Endothelial cell of umbilical vein (primary cell): ENCODE measurements at regions of chr19 and their contacts with region 1.

Region 1: GRCh38 chr19:40305403-40305802 is 20.3 kb upstream of the AKT2 start:
- DNase-seq: peak; percentile 82
- H3K4me3 ChIP-seq: no peak overlapping the region
- H3K27ac ChIP-seq: no peak overlapping the region
- H3K4me1 ChIP-seq: no peaks in the 10 kb centered on the region
- H3K27me3 ChIP-seq: no peaks in the 10 kb centered on the region
- CTCF ChIP-seq: peak; percentile 66 to 68
- POLR2A ChIP-seq: no peak

Region 2: GRCh38 chr19:40294560-40294959 is 10.8 kb before region 1 on chr19:
- CTCF ChIA-PET with region 1: interaction called, 11 read pairs
- POLR2A ChIA-PET with region 1: no interaction called
- dilution Hi-C with region 1: no loop called
- intact Hi-C with region 1: no loop called
- DNase-seq: no peak
- H3K4me3 ChIP-seq: no peak overlapping the region
- H3K27ac ChIP-seq: no peak overlapping the region
- H3K4me1 ChIP-seq: no peaks in the 10 kb centered on the region
- H3K27me3 ChIP-seq: no peaks in the 10 kb centered on the region
- CTCF ChIP-seq: no peak
- POLR2A ChIP-seq: no peak

Region 3: GRCh38 chr19:40444192-40445028 is 139.0 kb after region 1 on chr19 and contains the start of gene SERTAD3:
- CTCF ChIA-PET with region 1: interaction called, 25 read pairs
- POLR2A ChIA-PET with region 1: no interaction called
- dilution Hi-C with region 1: no loop called
- intact Hi-C with region 1: loop called (anchors 1 kb)
- DNase-seq: peak; percentile 97
- H3K4me3 ChIP-seq: peak within 1 kb of the TSS; percentile 52 to 98 (median 95)
- H3K27ac ChIP-seq: peak within 1 kb of the TSS; percentile 90
- H3K4me1 ChIP-seq: peaks cover 9% of the 10 kb centered on the region
- H3K27me3 ChIP-seq: no peaks in the 10 kb centered on the region
- CTCF ChIP-seq: peak in 1 of 2 donors; percentile 33
- POLR2A ChIP-seq: peak; percentile 68
- total RNA-seq, gene SERTAD3: 29.9 and 32.0 TPM in 2 replicates

Region 4: GRCh38 chr19:40529093-40529954 is 223.9 kb after region 1 on chr19:
- CTCF ChIA-PET with region 1: interaction called, 19 read pairs
- POLR2A ChIA-PET with region 1: no interaction called
- dilution Hi-C with region 1: no loop called
- intact Hi-C with region 1: no loop called
- DNase-seq: peak; percentile 87
- H3K4me3 ChIP-seq: peak overlapping the region in 1 of 3 experiments; percentile 27
- H3K27ac ChIP-seq: no peak overlapping the region
- H3K4me1 ChIP-seq: no peaks in the 10 kb centered on the region
- H3K27me3 ChIP-seq: peaks cover 2 to 6% of the 10 kb centered on the region in 2 experiments
- CTCF ChIP-seq: peak; percentile 93 to 98
- POLR2A ChIP-seq: no peak

Region 5: DNA sequence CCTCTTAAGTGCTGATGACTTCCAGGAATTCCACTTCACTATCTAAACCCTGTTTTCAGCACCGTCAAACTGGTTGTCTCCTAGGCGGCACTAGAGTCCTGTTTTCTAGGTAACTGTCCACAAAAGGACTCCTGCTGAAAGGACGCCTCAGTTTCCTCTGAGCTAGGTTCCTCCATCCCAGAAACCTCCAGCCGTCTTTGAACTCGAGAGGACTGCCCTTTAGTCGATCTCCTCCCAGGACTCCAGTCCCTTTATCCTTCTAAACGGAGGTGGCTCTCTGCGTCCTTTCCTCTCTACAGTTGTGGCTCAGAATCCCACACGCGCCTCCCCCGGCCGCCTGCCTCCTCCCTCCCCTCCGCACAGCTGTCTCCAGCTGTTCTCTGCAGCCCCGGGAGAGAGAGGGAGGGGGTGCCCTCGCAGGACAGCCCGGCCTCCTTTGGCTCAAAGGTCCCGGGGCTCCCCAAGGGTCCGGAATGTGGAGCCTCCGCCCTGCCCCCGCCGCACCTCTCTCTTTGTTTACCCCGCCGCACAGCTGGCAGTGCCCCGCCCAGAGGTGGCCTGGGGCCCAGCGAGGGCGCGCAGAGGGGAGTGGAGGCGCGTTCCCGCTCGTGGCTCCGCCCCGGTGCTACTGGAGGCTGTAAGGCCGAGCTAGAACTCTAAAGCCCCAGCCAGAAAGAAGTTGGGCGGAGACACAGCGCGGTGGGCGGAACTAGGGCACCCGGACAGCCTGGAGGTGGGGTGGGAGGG is 298.2 kb after region 1 on chr19:
- CTCF ChIA-PET with region 1: interaction called, 21 read pairs
- POLR2A ChIA-PET with region 1: no interaction called
- dilution Hi-C with region 1: no loop called
- intact Hi-C with region 1: loop called (anchors 1 kb)
- DNase-seq: peak; percentile 96
- H3K4me3 ChIP-seq: peak overlapping the region in 2 of 3 experiments; percentile 12 to 45
- H3K27ac ChIP-seq: no peak overlapping the region
- H3K4me1 ChIP-seq: peaks cover 45% of the 10 kb centered on the region
- H3K27me3 ChIP-seq: peaks cover 4 to 6% of the 10 kb centered on the region in 2 experiments
- CTCF ChIP-seq: no peak
- POLR2A ChIP-seq: no peak

Region 6: GRCh38 chr19:40662921-40663694 is 357.7 kb after region 1 on chr19:
- CTCF ChIA-PET with region 1: interaction called, 3 read pairs
- POLR2A ChIA-PET with region 1: interaction called, 11 read pairs
- dilution Hi-C with region 1: no loop called
- intact Hi-C with region 1: no loop called
- DNase-seq: peak; percentile 82
- H3K4me3 ChIP-seq: peak overlapping the region; percentile 44 to 63 (median 51)
- H3K27ac ChIP-seq: no peak overlapping the region
- H3K4me1 ChIP-seq: peaks cover 13% of the 10 kb centered on the region
- H3K27me3 ChIP-seq: no peaks in the 10 kb centered on the region
- CTCF ChIP-seq: peak; percentile 84 to 96
- POLR2A ChIP-seq: peak; percentile 10